Mucosa of descending colon (tissue), 3 donors: ENCODE measurements at regions of chr2 and their contacts with region 1.

Region 1: DNA sequence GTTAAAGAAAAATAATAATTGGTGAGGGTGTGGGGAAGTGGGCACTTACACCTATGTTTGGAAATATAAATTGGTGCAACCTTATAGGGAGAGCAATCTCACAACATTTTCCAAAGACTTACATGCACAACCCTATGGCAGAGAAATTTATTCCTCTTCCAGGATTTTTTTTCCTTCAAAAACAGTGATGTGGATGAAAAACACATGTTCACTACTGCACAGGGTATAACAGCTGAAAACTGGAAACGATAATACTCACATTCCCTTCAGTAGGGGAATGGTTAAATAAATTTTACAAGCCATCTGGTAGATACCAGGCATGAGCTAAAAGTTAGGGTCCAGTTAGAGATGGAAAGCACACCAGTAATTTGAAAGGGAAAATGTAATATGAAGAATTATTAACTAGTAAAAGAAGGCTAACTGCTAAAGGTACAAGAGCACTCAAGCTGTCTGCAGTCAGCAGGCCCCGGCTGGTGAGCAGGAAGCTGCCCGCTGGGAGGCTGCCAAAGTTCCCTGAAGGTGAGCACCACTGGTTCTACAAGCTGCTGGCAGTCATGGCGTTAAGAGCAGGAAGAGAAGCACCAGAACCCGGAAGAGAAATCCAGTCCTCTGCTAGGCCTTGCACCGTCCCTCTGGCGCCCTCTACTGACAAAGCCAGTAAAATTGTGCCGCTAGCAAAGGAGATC is 28.4 kb upstream of the CASP8 start:
- DNase-seq: peak; percentile 89 to 96 (median 94)
- ATAC-seq: peak; percentile 81
- H3K4me3 ChIP-seq: no peak overlapping the region
- H3K4me1 ChIP-seq: peaks cover 26% of the 10 kb centered on the region
- CTCF ChIP-seq: peak; percentile 77

Region 2: DNA sequence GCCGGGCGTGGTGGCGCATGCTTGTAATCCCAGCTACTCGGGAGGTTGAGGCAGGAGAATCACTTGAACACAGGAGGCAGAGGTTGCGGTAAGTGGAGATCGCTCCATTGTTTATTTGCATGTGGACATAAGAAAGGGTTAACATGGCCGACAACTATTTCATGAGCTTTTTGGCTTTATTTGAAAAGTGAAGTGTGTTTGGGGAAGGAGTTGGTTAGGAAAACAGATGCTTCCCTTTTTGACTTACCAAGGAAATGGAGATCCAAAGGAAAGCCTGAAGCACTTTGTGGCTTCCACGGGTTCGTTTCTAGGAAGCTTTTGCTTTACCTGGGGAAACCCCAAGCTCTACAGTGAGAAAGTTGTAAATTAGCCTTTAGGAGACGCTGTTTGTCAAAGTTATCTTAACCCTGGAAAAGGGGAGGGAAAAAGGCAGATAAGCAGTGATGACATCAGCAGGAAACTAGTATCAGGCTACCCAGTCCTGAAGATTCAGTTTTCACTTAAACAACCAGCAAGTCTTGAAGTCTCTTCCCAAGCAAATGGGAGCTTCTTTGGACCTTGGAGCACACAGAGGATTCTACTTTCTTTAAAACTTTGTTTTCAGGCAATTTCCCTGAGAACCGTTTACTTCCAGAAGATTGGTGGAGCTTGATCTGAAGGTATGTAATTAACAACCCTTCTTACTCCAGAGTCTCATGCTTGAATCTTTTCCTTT is 49.1 kb before region 1 on chr2 and contains the start of gene CASP10:
- intact Hi-C with region 1: loop called in 1 of 2 experiments (anchors 5 kb)
- DNase-seq: peak in 1 of 3 donors; percentile 63
- ATAC-seq: peak; percentile 94
- H3K4me3 ChIP-seq: peak within 1 kb of the TSS; percentile 27
- H3K4me1 ChIP-seq: peaks cover 3% of the 10 kb centered on the region
- CTCF ChIP-seq: no peak
- total RNA-seq, gene CASP10: 38.6 to 66.1 (median 58.5) TPM

Region 3: DNA sequence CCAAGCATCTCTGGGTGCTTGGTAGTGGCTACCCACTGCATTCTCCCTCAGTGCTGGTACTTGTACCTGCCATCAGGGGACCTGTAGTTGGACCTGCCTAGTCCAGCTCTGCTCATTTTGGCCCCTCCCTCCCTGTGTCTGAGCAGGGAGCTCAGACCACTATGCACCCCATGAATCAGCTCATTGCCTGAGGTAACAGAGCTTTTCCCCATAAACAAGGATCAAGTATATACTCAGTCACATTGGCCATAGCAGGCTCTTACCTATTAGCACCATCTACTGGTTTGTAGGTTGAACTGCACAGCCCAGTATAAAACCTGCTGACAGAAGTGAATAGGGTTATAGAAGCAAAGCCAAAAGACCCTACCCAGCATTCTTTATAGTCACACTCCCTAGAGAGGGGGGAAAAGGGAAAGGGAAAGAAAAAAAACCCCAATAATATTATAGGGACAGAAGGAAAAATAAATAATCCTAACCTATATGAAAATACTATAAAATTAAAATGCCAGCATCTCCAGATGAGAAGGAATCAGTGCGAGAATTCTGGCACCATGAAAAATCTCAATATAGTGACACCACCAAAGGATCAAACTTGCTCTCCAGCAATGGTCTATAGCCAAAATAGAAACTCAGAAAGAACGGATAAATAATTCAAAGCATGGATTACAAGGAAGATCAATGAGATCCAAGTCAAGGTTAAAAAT is 132.1 kb after region 1 on chr2:
- intact Hi-C with region 1: loop called (anchors 5 to 10 kb)
- DNase-seq: peak in 1 of 3 donors; percentile 40
- ATAC-seq: peak; percentile 87
- H3K4me3 ChIP-seq: no peak overlapping the region
- H3K4me1 ChIP-seq: no peaks in the 10 kb centered on the region
- CTCF ChIP-seq: peak; percentile 81